Breast epithelium (tissue), 4 donors: ENCODE measurements at regions of chr5 and their contacts with region 1.

Region 1: GRCh38 chr5:137122075-137122474 is 377.1 kb downstream of the SPOCK1 start:
- DNase-seq: no peak
- H3K4me3 ChIP-seq: no peak overlapping the region
- H3K27ac ChIP-seq: no peak overlapping the region
- H3K4me1 ChIP-seq: no peaks in the 10 kb centered on the region
- H3K27me3 ChIP-seq: no peaks in the 10 kb centered on the region
- CTCF ChIP-seq: no peak
- POLR2A ChIP-seq: no peak

Region 2: GRCh38 chr5:137051165-137051564 is 70.9 kb before region 1 on chr5:
- intact Hi-C with region 1: no loop called
- DNase-seq: no peak
- H3K4me3 ChIP-seq: no peak overlapping the region
- H3K27ac ChIP-seq: no peak overlapping the region
- H3K4me1 ChIP-seq: no peaks in the 10 kb centered on the region
- H3K27me3 ChIP-seq: no peaks in the 10 kb centered on the region
- CTCF ChIP-seq: no peak
- POLR2A ChIP-seq: no peak

Region 3: GRCh38 chr5:137134920-137135532 is 13.0 kb after region 1 on chr5:
- intact Hi-C with region 1: loop called (anchors 1 kb)
- DNase-seq: no peak
- H3K4me3 ChIP-seq: no peak overlapping the region
- H3K27ac ChIP-seq: no peak overlapping the region
- H3K4me1 ChIP-seq: no peaks in the 10 kb centered on the region
- H3K27me3 ChIP-seq: no peaks in the 10 kb centered on the region
- CTCF ChIP-seq: no peak
- POLR2A ChIP-seq: no peak

Region 4: GRCh38 chr5:137470111-137470920 is 348.2 kb after region 1 on chr5:
- intact Hi-C with region 1: no loop called
- DNase-seq: no peak
- H3K4me3 ChIP-seq: no peak overlapping the region
- H3K27ac ChIP-seq: no peak overlapping the region
- H3K4me1 ChIP-seq: no peaks in the 10 kb centered on the region
- H3K27me3 ChIP-seq: no peaks in the 10 kb centered on the region
- CTCF ChIP-seq: no peak
- POLR2A ChIP-seq: no peak